GM18951 (cell line): ENCODE measurements at regions of chr12 and their contacts with region 1.

Region 1: DNA sequence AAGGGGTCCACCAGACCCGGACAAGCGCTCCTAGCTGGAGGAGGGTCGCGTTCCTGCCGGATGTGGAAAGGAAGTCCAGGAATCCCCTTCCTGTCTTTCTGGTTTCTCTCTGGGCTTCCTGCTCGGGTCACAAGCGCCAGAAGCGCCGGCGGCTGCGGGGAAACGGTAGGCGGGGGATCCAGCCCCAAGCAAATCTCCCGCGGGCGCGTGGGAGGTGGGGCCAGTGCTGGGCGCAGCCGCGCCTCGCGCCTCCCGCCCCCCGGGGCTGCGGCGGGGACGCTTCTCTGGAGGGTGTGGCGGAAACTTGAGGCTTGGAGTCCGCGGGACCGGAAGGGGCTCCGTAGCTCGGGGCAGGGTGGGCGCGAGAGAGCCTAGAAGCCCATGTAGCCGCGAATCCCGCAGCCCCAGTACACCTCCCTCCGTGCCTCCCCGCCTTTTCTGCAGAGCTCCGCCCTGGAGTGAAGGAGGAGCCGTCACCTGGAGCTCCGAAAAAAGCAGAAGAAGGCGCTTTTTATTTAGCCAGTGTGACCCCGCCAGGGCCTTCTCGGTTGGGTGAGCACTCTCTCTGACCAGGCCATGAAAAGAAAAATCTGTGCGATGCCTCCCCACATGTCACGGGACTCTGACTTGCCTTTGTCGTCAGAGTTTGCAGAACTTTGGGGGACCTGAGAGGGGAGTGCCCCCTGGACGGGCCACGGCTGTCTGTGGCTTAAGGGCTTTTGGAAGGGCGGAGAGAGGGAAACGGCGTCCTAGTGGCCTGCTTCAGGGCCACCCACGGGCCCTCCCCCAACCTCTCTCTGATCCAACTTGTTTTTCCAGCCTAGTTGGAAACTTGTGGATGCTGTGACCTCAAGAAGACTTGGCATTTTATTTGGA is 21.4 kb upstream of the CLEC2D start:
- POLR2A ChIP-seq: peak; percentile 76

Region 2: GRCh38 chr12:9032202-9033178 is 615.6 kb before region 1 on chr12:
- in situ Hi-C with region 1: no loop called
- POLR2A ChIP-seq: no peak

Region 3: GRCh38 chr12:9331218-9331626 is 316.8 kb before region 1 on chr12:
- in situ Hi-C with region 1: loop called (anchors 25 kb)
- POLR2A ChIP-seq: no peak

Region 4: DNA sequence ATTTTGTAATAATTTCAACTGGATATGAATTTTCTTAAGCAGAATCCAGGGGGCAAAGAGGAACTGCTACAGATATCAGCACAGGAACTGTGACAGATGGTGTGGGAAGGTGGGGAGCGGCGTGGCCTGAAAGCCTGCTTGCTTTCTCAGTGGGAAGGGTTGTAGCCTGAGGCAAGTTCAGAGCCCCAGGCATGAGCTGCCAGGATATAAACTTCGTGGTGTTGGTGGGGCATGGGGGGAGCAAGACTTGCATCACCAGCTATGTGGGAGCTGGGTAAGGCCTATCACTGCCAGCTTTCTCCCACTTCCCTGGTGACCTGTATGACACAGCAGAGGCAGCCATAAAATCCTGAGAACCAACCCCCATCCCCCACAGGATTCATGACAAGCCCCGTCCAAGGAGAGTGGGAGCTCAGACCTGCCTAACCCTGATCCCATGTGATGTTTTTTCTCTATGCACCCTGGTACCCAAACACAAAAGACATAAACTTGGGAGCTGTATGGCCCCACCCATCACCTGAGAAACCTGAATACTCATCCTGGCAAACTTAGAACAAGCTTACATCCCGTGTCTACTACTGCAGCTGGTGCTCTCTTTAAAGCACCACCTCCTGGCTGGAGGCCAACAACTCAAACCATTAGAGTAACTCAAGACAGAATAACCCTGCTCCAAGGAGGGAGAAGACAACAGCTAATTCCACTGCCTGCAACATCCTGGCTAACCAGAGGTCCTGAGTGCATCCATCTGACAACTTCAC is 434.2 kb after region 1 on chr12:
- in situ Hi-C with region 1: no loop called
- POLR2A ChIP-seq: no peak